AG04450 (cell line): ENCODE measurements at regions of chr11 and their contacts with region 1.

Region 1: GRCh38 chr11:34501500-34501899 is 12.1 kb downstream of the ELF5 start:
- DNase-seq: peak; percentile 73
- H3K4me3 ChIP-seq: no peak overlapping the region
- H3K27ac ChIP-seq: peak overlapping the region; percentile 21
- H3K27me3 ChIP-seq: peaks cover 3% of the 10 kb centered on the region
- CTCF ChIP-seq: no peak

Region 2: GRCh38 chr11:34512840-34513681 is 11.6 kb after region 1 on chr11:
- CTCF ChIA-PET with region 1: interaction called, 13 read pairs
- POLR2A ChIA-PET with region 1: no interaction called
- DNase-seq: no peak
- H3K4me3 ChIP-seq: no peak overlapping the region
- H3K27ac ChIP-seq: no peak overlapping the region
- H3K27me3 ChIP-seq: no peaks in the 10 kb centered on the region
- CTCF ChIP-seq: peak; percentile 89

Region 3: GRCh38 chr11:34773826-34774225 is 272.3 kb after region 1 on chr11:
- CTCF ChIA-PET with region 1: no interaction called
- POLR2A ChIA-PET with region 1: no interaction called
- DNase-seq: peak; percentile 6
- H3K4me3 ChIP-seq: no peak overlapping the region
- H3K27ac ChIP-seq: no peak overlapping the region
- H3K27me3 ChIP-seq: peaks cover 4% of the 10 kb centered on the region
- CTCF ChIP-seq: no peak